AG04449 (cell line): ENCODE measurements at regions of chr10 and their contacts with region 1.

Region 1: DNA sequence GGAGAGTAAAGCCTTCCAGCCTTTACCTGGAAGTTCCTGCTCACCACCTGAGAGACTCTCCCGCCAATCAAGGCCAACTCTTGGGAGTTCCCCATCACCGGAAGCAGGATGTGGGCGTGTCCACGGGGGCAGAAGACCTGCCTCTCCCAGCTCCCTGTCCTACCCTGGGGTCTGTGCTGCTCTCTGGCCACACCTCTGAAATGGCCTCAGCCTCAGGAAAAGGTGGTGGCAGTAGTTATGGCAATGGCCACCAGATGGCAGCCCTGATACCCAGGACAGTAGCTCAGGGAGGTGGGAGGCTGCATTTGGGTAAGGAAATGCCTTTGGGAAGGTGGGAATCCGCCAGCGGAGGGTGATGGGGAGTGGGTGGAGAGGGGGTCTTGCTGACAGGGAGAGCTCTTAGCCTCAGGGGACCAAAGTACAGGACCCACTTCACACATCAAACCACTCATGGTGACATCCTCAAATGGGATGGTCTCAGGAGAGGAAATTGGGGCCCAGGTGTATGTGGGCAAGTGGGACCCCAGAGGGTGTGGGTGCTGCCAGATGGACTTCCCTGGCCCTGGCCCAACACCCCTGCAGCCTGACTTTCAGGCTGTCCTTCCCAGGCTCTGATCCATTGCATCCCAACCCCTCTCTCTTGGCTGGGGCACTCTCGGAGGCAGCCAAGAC is 33.9 kb downstream of the KAZALD1 start:
- DNase-seq: no peak
- H3K4me3 ChIP-seq: no peak overlapping the region
- CTCF ChIP-seq: peak; percentile 92

Region 2: DNA sequence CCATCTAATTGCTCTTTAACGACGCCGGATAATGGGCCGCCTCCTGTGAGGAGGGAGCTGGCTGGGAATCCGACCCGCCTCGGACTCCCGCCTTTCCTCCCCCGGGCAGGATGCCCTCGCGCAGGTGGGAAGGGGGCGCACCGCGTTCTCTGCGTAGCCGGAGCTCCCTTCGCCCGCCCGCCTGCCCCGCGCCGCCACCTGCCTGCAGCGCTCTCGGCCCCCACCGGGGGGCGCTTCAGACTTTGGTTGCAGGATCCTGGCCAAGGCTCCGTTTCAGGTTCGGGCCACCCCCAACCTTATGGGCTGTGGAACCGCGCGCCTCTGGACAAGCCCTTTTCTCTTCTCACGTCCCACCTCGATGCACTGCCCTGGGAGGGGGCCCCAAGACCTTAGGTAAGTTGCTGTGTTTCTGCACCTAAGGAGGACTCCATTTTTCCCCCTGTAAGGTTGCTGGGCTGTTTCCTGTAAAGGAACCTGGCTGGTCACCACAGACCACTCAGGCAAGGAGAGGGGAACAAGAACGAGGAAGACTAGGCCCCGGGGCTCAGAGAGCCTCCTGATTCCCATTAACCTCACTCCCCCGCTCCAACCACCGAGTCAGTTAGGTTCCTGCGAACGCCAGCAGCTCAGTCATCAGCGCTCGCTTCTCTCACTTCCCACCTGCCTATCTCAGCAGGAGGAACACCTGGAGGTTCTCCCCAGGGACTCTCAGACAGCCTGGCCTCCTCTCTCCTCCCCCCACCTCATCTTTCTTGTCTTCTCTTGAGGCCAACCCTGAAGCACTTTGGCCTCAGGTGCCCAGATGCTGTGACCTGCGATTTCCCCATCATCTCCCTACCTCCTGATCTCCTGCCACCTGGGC is 45.2 kb before region 1 on chr10:
- CTCF ChIA-PET with region 1: interaction called, 19 read pairs
- POLR2A ChIA-PET with region 1: no interaction called
- DNase-seq: no peak
- H3K4me3 ChIP-seq: peak overlapping the region; percentile 40
- CTCF ChIP-seq: peak; percentile 83

Region 3: DNA sequence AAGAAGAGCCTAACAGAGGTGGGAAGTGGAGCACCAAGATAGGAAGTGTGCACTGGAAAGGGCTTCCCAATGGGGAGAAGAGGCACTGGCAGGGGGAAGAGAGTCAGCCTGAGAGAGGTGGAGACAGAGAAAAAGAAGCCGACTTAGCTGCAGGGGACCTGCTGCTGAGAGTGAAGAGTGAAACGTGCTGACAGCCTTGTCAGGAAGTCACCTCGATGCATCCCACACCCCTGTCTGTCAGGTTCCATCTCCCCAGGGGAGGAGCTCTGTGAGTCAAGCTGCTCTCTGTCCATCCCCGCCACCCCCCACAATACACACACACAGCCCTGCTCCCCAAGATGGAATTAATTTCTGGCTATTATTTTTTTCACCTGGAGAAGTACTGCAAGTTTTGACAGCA is 19.9 kb before region 1 on chr10:
- CTCF ChIA-PET with region 1: interaction called, 99 read pairs
- POLR2A ChIA-PET with region 1: no interaction called
- DNase-seq: no peak
- H3K4me3 ChIP-seq: no peak overlapping the region
- CTCF ChIP-seq: no peak

Region 4: DNA sequence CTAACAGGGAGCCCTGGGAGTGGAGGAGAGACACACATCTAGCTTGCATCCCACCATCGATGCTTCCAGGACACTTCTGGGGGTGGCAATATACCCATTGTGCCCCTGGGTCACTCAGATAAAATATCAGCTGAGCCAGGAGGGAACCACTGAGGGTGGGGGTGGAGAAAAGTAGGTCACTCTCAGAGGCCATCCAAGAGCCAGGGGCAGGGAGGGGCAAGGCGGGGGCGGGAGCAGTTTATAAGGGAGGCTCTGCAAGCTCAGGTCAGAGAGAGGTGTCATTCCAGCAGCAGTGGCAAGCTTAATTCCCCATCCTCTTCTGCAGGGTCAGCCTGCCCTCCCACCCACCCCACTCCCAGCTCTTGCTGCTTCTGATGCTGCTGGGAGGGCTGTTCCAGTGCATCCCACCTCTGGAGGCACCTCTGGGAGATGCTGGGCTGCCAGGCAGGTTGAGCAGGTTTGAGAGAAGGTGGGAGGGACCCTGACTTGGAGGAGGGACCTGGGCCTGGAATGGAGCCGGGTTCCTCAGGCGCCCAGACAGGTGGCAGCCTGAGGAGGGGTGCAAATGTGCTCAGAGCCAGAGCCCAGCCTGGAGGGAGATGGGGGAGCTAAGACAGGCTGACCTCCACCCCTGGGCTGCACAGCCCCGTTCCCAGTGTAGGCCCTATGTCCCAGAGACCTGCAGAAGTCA is 15.3 kb after region 1 on chr10:
- CTCF ChIA-PET with region 1: interaction called, 88 read pairs
- POLR2A ChIA-PET with region 1: no interaction called
- DNase-seq: no peak
- H3K4me3 ChIP-seq: no peak overlapping the region
- CTCF ChIP-seq: no peak

Region 5: DNA sequence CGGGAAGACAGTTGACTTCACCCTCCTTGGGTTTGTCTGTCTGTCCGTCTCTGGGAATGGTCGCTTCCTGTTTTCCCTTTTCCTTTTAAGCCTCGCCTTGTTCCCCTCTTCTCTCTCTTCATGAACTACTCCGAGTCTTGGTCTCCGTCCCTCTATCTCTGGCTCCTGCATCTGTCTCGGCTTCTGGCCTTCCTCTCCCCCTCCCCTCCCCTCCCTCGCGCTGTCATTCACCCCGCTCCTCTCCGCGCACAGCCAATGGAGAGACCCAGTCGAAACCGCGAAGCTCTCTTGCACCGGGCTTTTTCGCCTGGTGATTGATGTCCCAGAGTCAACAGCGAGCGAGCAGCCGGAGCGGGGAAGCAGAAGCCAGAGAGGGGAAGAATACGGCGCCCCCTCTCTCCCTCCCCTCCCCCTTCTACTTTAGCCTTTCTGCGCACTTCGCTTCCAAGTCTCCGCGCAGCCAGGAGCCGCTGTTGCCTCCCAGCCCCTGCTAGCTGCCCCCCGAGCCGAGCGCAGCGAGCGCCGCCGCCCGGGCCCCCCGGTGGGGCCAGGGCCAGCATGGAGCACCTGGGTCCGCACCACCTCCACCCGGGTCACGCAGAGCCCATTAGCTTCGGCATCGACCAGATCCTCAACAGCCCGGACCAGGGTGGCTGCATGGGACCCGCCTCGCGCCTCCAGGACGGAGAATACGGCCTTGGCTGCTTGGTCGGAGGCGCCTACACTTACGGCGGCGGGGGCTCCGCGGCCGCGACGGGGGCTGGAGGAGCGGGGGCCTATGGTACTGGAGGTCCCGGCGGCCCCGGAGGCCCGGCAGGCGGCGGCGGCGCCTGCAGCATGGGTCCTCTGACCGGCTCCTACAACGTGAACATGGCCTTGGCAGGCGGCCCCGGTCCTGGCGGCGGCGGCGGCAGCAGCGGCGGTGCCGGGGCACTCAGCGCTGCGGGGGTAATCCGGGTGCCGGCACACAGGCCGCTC is 35.6 kb after region 1 on chr10 and contains the start of gene TLX1:
- CTCF ChIA-PET with region 1: interaction called, 27 read pairs
- POLR2A ChIA-PET with region 1: no interaction called
- DNase-seq: no peak
- H3K4me3 ChIP-seq: no peak within 1 kb of the TSS
- CTCF ChIP-seq: no peak

Region 6: GRCh38 chr10:101189541-101190401 is 94.1 kb after region 1 on chr10:
- CTCF ChIA-PET with region 1: no interaction called
- POLR2A ChIA-PET with region 1: no interaction called
- DNase-seq: no peak
- H3K4me3 ChIP-seq: no peak overlapping the region
- CTCF ChIP-seq: no peak